Endothelial cell of umbilical vein (primary cell): ENCODE measurements at regions of chr18 and their contacts with region 1.

Region 1: DNA sequence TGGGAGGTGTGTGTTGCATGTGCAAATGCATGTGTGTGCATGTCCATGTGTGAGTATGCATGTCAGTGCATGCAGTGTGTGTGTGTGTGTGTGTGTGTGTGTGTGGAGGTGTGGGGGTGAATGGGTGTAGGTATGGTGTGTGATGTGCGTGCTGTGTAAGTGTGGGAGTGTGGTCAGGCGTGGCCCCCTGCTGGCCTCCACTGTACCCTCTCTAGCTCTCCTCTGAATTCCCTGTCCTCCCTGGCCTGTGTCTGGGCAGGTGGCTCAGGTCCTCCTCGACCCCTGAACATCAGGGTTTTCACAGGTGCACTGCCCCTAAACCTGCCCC is 230.2 kb downstream of the CELF4 start:
- DNase-seq: no peak
- H3K4me3 ChIP-seq: no peak overlapping the region
- H3K27ac ChIP-seq: no peak overlapping the region
- H3K4me1 ChIP-seq: no peaks in the 10 kb centered on the region
- H3K27me3 ChIP-seq: no peaks in the 10 kb centered on the region
- CTCF ChIP-seq: peak in 1 of 2 donors; percentile 34
- POLR2A ChIP-seq: no peak

Region 2: GRCh38 chr18:37243741-37244140 is 91.6 kb before region 1 on chr18:
- CTCF ChIA-PET with region 1: no interaction called
- POLR2A ChIA-PET with region 1: no interaction called
- dilution Hi-C with region 1: no loop called
- intact Hi-C with region 1: no loop called
- DNase-seq: no peak
- H3K4me3 ChIP-seq: no peak overlapping the region
- H3K27ac ChIP-seq: no peak overlapping the region
- H3K4me1 ChIP-seq: no peaks in the 10 kb centered on the region
- H3K27me3 ChIP-seq: peaks cover 11 to 25% of the 10 kb centered on the region in 2 experiments
- CTCF ChIP-seq: no peak
- POLR2A ChIP-seq: no peak

Region 3: DNA sequence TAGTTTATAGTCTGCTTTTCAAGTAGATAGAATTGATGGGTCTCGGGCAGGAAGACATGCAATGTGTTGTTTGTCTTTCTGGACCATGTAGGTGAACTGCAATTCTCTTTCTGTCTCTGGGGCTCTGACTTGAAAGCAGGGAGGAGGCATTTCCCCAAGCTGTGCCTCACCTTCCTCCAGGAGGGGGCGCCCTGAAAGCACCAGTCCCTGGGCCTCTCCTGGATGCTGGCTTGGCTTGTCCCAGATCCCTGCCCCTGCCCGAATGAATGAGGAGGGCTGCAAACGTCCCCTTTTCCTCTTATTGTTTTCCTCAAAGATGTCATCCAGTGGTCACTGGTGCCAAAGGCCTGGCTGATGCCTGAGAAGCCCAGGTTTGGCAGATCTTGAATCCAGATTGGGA is 40.4 kb before region 1 on chr18:
- CTCF ChIA-PET with region 1: interaction called, 3 read pairs
- POLR2A ChIA-PET with region 1: no interaction called
- dilution Hi-C with region 1: no loop called
- intact Hi-C with region 1: loop called (anchors 1 kb)
- DNase-seq: peak; percentile 5
- H3K4me3 ChIP-seq: no peak overlapping the region
- H3K27ac ChIP-seq: no peak overlapping the region
- H3K4me1 ChIP-seq: no peaks in the 10 kb centered on the region
- H3K27me3 ChIP-seq: no peaks in the 10 kb centered on the region
- CTCF ChIP-seq: peak; percentile 26 to 49
- POLR2A ChIP-seq: no peak

Region 4: DNA sequence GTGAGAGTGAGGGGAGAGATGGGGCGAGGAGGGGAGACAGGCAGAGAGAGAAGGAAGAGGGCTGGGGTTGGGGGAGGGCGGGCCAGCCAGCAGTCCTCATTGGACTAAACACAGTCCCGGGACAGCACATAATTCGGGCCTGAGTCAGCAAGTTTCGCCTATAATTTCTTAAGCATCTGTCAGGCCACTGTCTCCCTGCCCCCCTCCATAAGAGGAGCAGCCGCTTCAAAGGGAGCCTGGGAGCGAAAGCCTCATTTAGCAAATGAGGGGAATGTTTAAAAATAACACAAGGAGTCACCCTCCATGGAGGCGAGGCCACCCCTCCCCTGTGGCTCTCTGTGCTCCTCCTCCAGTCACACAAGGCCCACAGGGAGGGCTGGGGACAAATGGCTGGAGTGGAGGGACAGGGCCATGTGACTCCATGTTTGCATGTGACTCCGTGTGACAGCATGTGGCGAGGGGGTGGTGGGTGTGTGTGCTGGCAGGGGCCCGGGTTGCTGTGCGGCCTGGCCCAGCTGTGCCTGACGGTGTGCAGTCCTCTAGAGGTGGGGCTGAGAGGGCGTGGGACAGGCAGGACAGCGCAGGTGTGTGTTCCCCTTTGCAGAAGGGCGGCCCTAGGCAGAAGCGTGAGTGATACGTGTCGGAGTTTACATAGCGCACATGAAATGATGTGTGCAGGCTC is 67.9 kb after region 1 on chr18:
- CTCF ChIA-PET with region 1: no interaction called
- POLR2A ChIA-PET with region 1: no interaction called
- dilution Hi-C with region 1: no loop called
- intact Hi-C with region 1: no loop called
- DNase-seq: no peak
- H3K4me3 ChIP-seq: no peak overlapping the region
- H3K27ac ChIP-seq: no peak overlapping the region
- H3K4me1 ChIP-seq: no peaks in the 10 kb centered on the region
- H3K27me3 ChIP-seq: no peaks in the 10 kb centered on the region
- CTCF ChIP-seq: no peak
- POLR2A ChIP-seq: no peak